ENCODE measurements at regions of chr12 and their contacts with region 1.

Region 1: DNA sequence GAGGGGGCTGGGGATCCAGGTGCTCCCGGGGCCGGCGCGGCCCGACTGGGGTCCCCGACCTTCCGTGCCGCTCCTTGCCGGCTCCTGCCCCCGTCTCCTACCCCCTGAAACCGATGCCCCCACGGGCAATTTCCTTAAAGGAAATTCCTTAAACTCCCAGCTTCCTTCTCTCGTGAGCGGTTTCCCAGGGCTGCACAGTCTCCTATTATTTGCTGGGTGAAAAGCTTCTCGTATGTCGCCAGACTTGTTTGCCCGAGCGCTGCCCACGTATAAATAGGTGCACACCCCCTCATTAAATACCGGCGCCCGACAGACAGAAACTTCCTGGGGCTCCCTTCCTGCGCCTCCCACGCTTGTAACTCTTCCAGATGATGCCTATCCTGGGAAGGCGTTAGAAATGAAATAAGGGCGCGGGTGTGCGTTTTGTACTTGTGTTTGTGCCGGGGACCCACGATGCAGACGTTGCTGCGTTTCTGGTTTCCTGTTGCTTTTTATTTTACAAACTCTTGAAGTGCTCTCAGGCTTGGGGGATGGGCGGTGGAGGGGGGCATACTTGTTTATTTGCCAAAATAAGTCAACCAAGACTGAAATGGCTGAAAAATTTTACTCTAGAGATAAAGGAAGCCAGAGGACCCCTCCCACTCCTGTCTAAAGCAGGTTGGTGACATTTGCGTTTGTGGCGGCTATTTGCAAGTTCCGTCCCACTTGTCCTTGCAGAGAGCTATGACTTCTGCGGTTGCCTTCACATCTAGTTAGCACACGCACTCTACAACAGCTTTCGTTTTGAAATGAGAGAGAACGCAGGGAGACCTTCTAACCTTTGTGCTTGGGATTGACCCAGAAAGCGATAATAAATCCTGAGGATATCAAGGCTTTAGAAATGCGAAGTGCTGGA is 1.0 kb downstream of the HIP1R start:
- DNase-seq: peak; percentile 48
- H3K4me3 Mint-ChIP-seq: peak overlapping the region; percentile 97
- H3K27ac Mint-ChIP-seq: peak overlapping the region; percentile 91
- H3K4me1 Mint-ChIP-seq: peaks cover 29% of the 10 kb centered on the region
- H3K27me3 Mint-ChIP-seq: peaks cover 25% of the 10 kb centered on the region

Region 2: GRCh38 chr12:122500685-122501488 is 335.4 kb before region 1 on chr12 and contains the start of gene ZCCHC8:
- intact Hi-C with region 1: no loop called
- DNase-seq: peak; percentile 96
- H3K4me3 Mint-ChIP-seq: peak within 1 kb of the TSS; percentile 92
- H3K27ac Mint-ChIP-seq: peak within 1 kb of the TSS; percentile 92
- H3K4me1 Mint-ChIP-seq: peaks cover 31% of the 10 kb centered on the region
- H3K27me3 Mint-ChIP-seq: no peaks in the 10 kb centered on the region
- total RNA-seq, gene ZCCHC8: 42.5 and 48.4 TPM in 2 replicates

Region 3: GRCh38 chr12:122563361-122563760 is 272.9 kb before region 1 on chr12:
- intact Hi-C with region 1: no loop called
- DNase-seq: no peak
- H3K4me3 Mint-ChIP-seq: no peak overlapping the region
- H3K27ac Mint-ChIP-seq: no peak overlapping the region
- H3K4me1 Mint-ChIP-seq: peaks cover 7% of the 10 kb centered on the region
- H3K27me3 Mint-ChIP-seq: no peaks in the 10 kb centered on the region

Region 4: DNA sequence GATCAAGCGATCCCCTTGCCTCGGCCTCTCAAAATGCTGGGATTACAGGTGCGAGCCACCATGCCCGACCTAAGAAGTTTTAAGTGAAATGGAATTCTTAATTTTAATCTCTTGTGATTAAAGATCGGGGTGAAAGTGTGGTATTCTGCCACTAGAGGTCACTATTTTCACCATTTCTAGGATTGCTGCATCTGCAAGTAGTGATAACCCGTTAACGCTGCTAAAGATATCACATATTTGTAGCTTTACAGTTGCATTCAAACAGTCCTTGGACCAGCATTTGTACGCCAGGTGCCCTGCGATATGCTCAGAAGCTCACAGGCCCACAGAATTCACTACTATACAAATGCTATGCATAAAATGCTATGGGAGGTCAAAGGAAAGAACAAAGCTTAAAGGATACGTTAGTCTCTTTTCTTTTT is 42.6 kb before region 1 on chr12:
- intact Hi-C with region 1: loop called (anchors 1 kb)
- DNase-seq: no peak
- H3K4me3 Mint-ChIP-seq: no peak overlapping the region
- H3K27ac Mint-ChIP-seq: no peak overlapping the region
- H3K4me1 Mint-ChIP-seq: peaks cover 4% of the 10 kb centered on the region
- H3K27me3 Mint-ChIP-seq: no peaks in the 10 kb centered on the region

Region 5: DNA sequence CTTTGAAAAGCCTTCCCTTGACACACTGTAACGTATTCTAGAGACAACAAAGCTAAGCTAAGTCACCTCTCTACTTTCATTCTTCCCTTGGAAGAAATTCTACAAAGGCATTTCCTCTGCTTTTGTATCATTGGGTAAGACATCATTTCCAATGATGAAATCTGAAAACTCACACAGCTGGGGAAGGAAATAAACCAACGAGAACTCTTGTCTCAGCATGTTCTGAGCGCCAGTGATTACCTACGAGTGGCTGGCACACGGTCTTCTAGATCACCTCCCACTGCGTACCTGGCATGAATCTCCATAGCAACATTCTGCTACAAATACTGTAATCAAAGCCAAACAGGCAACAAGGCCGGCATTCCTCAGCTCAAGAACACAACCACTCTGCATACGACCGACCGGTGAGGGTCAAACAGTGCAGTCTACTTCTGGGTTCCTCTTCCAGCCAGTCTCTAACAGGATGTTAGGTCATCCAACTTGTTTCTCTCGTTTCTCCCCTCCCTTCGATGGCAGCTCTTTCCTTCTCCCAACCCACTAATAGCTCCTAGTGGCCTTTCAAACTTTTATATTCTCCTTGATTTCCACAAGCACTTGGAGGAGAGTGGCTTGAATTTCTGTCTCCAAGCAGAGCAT is 52.1 kb after region 1 on chr12:
- intact Hi-C with region 1: loop called (anchors 5 kb)
- DNase-seq: peak; percentile 40
- H3K4me3 Mint-ChIP-seq: peak overlapping the region; percentile 81
- H3K27ac Mint-ChIP-seq: peak overlapping the region; percentile 90
- H3K4me1 Mint-ChIP-seq: peaks cover 65% of the 10 kb centered on the region
- H3K27me3 Mint-ChIP-seq: peaks cover 5% of the 10 kb centered on the region

Region 6: DNA sequence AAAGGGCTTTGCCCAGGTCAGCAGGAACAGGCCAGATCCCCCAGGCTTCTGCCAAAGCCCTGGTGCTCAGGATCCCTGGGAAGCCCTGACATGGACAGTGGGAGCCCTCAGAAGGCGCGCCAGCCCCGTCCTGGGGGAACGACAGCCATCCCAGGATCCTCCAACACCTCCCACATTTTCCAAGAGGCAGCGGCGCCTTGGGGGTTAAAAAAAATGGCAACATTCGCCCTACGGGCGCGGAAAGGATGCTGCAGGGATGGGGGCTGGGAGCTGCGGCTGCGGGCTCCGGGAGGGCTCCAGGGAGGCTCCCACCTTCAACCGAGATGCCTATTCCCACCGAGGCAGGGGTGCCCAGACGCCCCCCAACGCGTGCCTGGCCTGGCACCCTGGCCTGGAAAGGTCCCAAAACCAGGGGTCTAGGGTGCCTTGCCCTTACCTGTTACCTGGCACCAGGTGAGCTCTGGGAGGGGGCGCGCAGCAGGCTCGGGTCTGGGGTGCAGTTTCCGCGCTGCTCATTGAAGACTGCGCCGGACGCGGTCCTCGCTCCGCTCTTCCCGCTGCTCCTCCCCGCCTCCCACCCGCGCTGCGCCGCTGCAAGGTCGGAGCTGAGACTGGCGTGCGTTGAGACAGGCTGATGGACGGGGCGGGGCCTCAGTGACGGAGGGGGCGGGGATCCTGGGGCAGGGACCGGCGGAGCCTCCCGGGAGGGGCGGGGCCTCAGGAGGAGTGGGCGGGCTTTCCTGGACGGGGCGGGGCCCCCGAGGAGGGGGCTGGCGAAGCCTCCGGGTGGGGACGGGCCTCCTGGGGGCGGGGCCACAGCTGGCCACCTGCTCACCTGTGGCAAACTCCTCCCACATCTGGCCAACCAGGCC is 129.8 kb after region 1 on chr12 and contains the start of gene ABCB9:
- intact Hi-C with region 1: loop called (anchors 1 kb)
- DNase-seq: peak; percentile 84
- H3K4me3 Mint-ChIP-seq: peak within 1 kb of the TSS; percentile 37
- H3K27ac Mint-ChIP-seq: no peak within 1 kb of the TSS
- H3K4me1 Mint-ChIP-seq: peaks cover 12% of the 10 kb centered on the region
- H3K27me3 Mint-ChIP-seq: peaks cover 16% of the 10 kb centered on the region
- total RNA-seq, gene ABCB9: 3.8 and 4.4 TPM in 2 replicates